ENCODE measurements at regions of chr7 and their contacts with region 1.

Region 1: GRCh38 chr7:138738551-138739335 is 37.6 kb upstream of the SVOPL start:
- DNase-seq: peak; percentile 89
- H3K4me3 ChIP-seq: no peak overlapping the region
- H3K27ac ChIP-seq: no peak overlapping the region
- H3K4me1 ChIP-seq: no peaks in the 10 kb centered on the region
- H3K27me3 ChIP-seq: no peaks in the 10 kb centered on the region
- CTCF ChIP-seq: peak; percentile 89 to 96
- POLR2A ChIP-seq: no peak

Region 2: GRCh38 chr7:137606061-137606674 is 1132.6 kb before region 1 on chr7:
- CTCF ChIA-PET with region 1: interaction called, 19 read pairs
- POLR2A ChIA-PET with region 1: no interaction called
- dilution Hi-C with region 1: no loop called
- intact Hi-C with region 1: loop called (anchors 5 kb)
- DNase-seq: peak; percentile 62
- H3K4me3 ChIP-seq: no peak overlapping the region
- H3K27ac ChIP-seq: no peak overlapping the region
- H3K4me1 ChIP-seq: no peaks in the 10 kb centered on the region
- H3K27me3 ChIP-seq: peaks cover 15 to 24% of the 10 kb centered on the region in 2 experiments
- CTCF ChIP-seq: peak in 1 of 2 donors; percentile 19
- POLR2A ChIP-seq: no peak

Region 3: GRCh38 chr7:138008547-138009349 is 730.0 kb before region 1 on chr7:
- CTCF ChIA-PET with region 1: interaction called, 32 read pairs
- POLR2A ChIA-PET with region 1: no interaction called
- dilution Hi-C with region 1: no loop called
- intact Hi-C with region 1: loop called (anchors 1 kb)
- DNase-seq: peak; percentile 58
- H3K4me3 ChIP-seq: no peak overlapping the region
- H3K27ac ChIP-seq: no peak overlapping the region
- H3K4me1 ChIP-seq: peaks cover 8% of the 10 kb centered on the region
- H3K27me3 ChIP-seq: no peaks in the 10 kb centered on the region
- CTCF ChIP-seq: peak; percentile 65 to 72
- POLR2A ChIP-seq: no peak

Region 4: DNA sequence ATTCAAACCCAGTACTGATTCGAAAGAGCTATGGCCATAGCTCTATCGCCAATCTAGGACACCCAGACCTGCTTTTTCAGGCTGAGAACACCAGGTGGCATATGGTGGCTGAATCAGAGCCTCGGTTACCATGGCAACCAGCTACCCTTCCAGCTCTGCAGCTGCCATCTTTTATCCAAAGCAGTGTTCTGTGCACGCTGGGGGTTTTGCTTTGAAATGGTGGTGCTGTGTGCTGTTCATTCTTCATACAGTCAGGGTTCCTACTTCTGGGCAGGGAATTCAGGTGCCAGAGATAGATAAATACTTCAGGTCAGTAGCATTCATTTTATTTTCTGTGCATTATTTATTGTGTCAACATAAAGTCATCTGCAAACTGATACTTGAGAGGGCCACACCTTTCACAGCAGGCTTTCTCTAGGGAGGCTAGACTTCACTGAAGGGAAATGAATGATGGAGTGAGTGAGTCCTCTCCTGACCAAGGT is 577.1 kb before region 1 on chr7:
- CTCF ChIA-PET with region 1: interaction called, 345 read pairs
- POLR2A ChIA-PET with region 1: interaction called, 7 read pairs
- dilution Hi-C with region 1: no loop called
- intact Hi-C with region 1: loop called (anchors 1 kb)
- DNase-seq: peak; percentile 76
- H3K4me3 ChIP-seq: no peak overlapping the region
- H3K27ac ChIP-seq: no peak overlapping the region
- H3K4me1 ChIP-seq: no peaks in the 10 kb centered on the region
- H3K27me3 ChIP-seq: no peaks in the 10 kb centered on the region
- CTCF ChIP-seq: peak; percentile 61 to 77
- POLR2A ChIP-seq: no peak

Region 5: GRCh38 chr7:138449580-138449979 is 289.2 kb before region 1 on chr7:
- CTCF ChIA-PET with region 1: interaction called, 25 read pairs
- POLR2A ChIA-PET with region 1: no interaction called
- dilution Hi-C with region 1: no loop called
- intact Hi-C with region 1: loop called (anchors 1 kb)
- DNase-seq: no peak
- H3K4me3 ChIP-seq: no peak overlapping the region
- H3K27ac ChIP-seq: no peak overlapping the region
- H3K4me1 ChIP-seq: no peaks in the 10 kb centered on the region
- H3K27me3 ChIP-seq: no peaks in the 10 kb centered on the region
- CTCF ChIP-seq: peak; percentile 28 to 44
- POLR2A ChIP-seq: no peak

Region 6: GRCh38 chr7:138919216-138919615 is 180.5 kb after region 1 on chr7:
- CTCF ChIA-PET with region 1: no interaction called
- POLR2A ChIA-PET with region 1: no interaction called
- dilution Hi-C with region 1: no loop called
- intact Hi-C with region 1: no loop called
- DNase-seq: no peak
- H3K4me3 ChIP-seq: no peak overlapping the region
- H3K27ac ChIP-seq: no peak overlapping the region
- H3K4me1 ChIP-seq: no peaks in the 10 kb centered on the region
- H3K27me3 ChIP-seq: no peaks in the 10 kb centered on the region
- CTCF ChIP-seq: no peak
- POLR2A ChIP-seq: no peak

Measured in endothelial cell of umbilical vein (primary cell).